B cell (primary cell): ENCODE measurements at regions of chr10 and their contacts with region 1.

Region 1: DNA sequence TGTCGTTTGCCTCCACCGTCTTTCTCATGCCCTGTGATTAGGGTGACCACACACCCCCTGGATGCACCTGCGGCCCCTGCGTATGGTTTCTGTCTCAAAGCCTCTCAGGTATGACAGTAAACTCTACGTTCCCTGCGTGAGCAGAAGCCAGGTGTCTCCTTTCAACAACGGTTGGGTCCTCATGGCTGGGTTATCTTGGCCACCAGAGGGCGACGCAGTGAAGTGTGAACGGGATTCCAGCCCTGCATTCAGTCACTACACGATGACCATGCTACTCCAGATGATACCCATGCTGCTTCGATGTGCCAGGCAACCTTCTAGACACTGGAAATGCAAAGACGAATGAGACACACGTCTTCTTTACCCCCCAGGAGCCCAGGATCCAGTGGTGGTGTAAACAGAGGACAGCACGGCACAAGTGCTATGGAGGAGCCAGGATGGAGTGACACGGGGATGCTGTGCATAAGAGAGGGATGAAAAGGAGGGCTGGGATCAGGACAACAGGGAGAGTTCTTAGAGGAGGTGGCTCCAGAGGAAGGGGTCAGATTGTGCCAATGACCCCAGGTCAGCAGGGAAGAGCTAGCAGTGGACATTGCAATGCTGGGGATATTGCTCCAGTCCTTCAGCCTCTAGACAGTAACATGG is 228.1 kb upstream of the PFKP start:
- DNase-seq: peak; percentile 31
- ATAC-seq: no peak
- H3K4me3 ChIP-seq: no peak overlapping the region
- H3K4me3 Mint-ChIP-seq: no peak overlapping the region
- H3K27ac ChIP-seq: no peak overlapping the region
- H3K27ac Mint-ChIP-seq: no peak overlapping the region
- H3K4me1 ChIP-seq: no peaks in the 10 kb centered on the region
- H3K4me1 Mint-ChIP-seq: no peaks in the 10 kb centered on the region
- H3K27me3 ChIP-seq: no peaks in the 10 kb centered on the region
- H3K27me3 Mint-ChIP-seq: peaks cover 18% of the 10 kb centered on the region
- CTCF ChIP-seq: peak; percentile 43

Region 2: GRCh38 chr10:2856598-2856997 is 17.4 kb after region 1 on chr10:
- CTCF ChIA-PET with region 1: no interaction called
- POLR2A ChIA-PET with region 1: no interaction called
- intact Hi-C with region 1: no loop called
- DNase-seq: no peak
- ATAC-seq: no peak
- H3K4me3 ChIP-seq: no peak overlapping the region
- H3K4me3 Mint-ChIP-seq: no peak overlapping the region
- H3K27ac ChIP-seq: no peak overlapping the region
- H3K27ac Mint-ChIP-seq: no peak overlapping the region
- H3K4me1 ChIP-seq: no peaks in the 10 kb centered on the region
- H3K4me1 Mint-ChIP-seq: no peaks in the 10 kb centered on the region
- H3K27me3 ChIP-seq: peaks cover 0 to 4% (median 0%) of the 10 kb centered on the region in 4 experiments
- H3K27me3 Mint-ChIP-seq: peaks cover 13% of the 10 kb centered on the region
- CTCF ChIP-seq: no peak

Region 3: DNA sequence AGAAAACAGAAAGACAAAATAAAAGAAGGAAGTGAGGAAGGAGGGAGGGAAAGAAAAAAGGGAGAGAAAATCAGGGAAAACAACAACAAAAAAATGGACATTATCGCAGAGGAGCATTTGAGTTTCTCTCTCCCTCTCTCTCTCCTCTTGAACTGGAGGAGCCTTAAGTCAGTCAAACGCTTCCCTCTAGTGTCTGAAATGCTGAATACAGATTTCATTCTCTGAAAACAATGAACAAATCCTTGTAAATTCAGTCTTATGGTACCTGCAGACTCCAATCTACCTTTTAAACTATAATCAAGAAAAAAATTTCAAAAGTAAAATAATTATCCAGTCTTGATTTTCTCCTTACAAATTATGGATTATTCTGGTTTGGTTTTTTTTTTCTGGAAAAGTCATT is 138.9 kb after region 1 on chr10:
- CTCF ChIA-PET with region 1: no interaction called
- POLR2A ChIA-PET with region 1: no interaction called
- intact Hi-C with region 1: loop called (anchors 5 kb)
- DNase-seq: peak; percentile 49
- ATAC-seq: no peak
- H3K4me3 ChIP-seq: no peak overlapping the region
- H3K4me3 Mint-ChIP-seq: no peak overlapping the region
- H3K27ac ChIP-seq: no peak overlapping the region
- H3K27ac Mint-ChIP-seq: no peak overlapping the region
- H3K4me1 ChIP-seq: peaks cover 24 to 47% of the 10 kb centered on the region in 2 donors
- H3K4me1 Mint-ChIP-seq: peaks cover 29% of the 10 kb centered on the region
- H3K27me3 ChIP-seq: no peaks in the 10 kb centered on the region
- H3K27me3 Mint-ChIP-seq: no peaks in the 10 kb centered on the region
- CTCF ChIP-seq: peak; percentile 48